ENCODE measurements at regions of chr6 and their contacts with region 1.

Region 1: DNA sequence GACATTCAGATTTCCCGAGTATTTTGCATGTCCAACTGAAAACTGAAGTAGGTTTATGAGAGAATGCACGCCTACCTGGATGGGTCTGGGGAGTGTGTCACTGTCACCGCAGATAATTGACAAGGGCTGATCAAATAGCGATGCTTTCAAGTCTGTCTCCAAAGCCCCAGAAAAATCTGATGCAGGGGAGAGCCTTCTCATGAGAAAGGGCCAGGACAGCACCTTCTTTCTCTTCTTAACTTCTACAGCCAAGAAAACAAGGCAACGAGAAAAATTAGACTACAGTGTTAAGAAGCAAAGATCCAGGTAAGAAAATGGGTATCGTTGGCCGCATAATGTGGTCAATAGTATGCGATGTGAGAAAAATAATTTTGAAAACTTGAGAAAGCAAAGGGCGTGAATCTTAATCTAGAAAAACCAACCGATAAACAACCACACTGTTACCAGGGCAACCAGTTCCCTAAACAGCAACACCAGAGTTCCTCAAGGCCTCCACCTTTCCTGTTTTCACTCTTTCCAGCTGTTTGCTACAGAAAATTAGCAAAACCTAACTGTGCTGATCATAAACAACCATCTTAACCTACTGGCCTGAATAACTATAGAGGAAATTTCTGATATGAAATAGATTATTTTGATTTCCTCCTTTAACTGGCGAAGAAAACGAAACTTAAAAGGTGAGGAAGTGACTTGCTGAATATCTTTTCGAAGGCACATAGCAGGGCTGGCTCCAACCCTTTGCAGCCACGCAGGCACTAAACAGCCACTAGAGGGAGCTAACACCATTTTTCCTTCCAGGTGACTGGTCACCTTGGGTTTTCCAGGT is 2.6 kb downstream of the TAGAP start:
- DNase-seq: peak; percentile 93
- H3K4me3 Mint-ChIP-seq: peak overlapping the region; percentile 94
- H3K27ac Mint-ChIP-seq: peak overlapping the region; percentile 99
- H3K4me1 Mint-ChIP-seq: peaks cover 58% of the 10 kb centered on the region
- H3K27me3 Mint-ChIP-seq: no peaks in the 10 kb centered on the region

Region 2: DNA sequence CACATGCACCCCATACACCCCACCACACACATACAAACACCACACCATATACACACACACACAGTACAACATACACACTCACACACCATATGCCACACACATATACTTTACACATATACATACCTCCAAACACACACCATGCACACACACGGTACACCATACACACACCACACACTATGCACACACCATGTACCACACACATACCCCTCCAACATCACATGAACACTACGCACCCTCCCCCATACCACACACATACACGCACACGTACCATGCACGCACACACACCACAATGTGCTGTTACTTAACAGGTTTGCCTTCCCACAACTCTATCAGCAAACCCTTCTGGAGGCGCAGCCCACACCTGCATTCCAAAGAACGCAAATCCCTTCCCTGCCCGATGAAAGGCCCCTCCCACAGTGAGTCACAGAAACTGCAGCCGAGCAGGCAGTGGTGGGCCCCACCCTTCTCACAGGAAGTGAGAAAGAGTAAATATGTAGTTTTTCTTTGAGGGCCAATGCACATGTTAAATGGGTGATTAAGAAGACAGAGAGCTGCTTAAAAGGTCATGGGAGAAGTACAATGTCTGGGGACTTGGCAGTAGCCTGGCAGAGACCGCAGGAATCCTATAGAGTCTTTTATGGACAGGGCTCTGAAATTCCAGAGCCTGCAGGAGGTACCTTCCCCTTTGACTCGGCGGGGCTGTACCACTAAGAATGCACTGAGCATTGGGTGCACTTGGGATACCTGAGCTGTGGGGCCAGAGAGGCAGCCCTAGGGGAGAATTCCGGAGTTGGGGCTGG is 188.9 kb before region 1 on chr6:
- intact Hi-C with region 1: loop called (anchors 5 kb)
- DNase-seq: peak; percentile 96
- H3K4me3 Mint-ChIP-seq: no peak overlapping the region
- H3K27ac Mint-ChIP-seq: no peak overlapping the region
- H3K4me1 Mint-ChIP-seq: peaks cover 32% of the 10 kb centered on the region
- H3K27me3 Mint-ChIP-seq: no peaks in the 10 kb centered on the region

Region 3: DNA sequence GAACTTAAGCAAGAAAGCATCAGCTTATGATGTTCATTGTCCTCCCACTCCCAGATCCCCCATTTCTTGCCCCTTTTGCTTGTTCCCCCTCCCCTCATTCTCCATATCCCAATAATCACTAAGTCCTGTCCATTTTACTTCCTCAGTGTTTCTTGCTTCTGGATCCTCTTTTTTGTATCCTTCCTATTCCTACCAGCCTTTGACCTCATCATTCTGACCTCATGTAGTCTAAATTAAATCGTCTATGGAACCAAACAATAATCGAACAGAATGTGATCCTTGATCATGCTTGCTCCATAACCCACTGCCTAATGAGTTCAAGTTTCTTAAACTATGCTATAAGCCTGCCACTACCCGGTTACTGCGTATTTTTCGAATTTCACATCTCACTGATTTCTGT is 36.8 kb before region 1 on chr6:
- intact Hi-C with region 1: no loop called
- DNase-seq: no peak
- H3K4me3 Mint-ChIP-seq: no peak overlapping the region
- H3K27ac Mint-ChIP-seq: no peak overlapping the region
- H3K4me1 Mint-ChIP-seq: peaks cover 25% of the 10 kb centered on the region
- H3K27me3 Mint-ChIP-seq: no peaks in the 10 kb centered on the region

Region 4: GRCh38 chr6:159017757-159018559 is 24.3 kb before region 1 on chr6:
- intact Hi-C with region 1: loop called (anchors 1 kb)
- DNase-seq: no peak
- H3K4me3 Mint-ChIP-seq: peak overlapping the region; percentile 45
- H3K27ac Mint-ChIP-seq: peak overlapping the region; percentile 79
- H3K4me1 Mint-ChIP-seq: peaks cover 42% of the 10 kb centered on the region
- H3K27me3 Mint-ChIP-seq: no peaks in the 10 kb centered on the region

Region 5: DNA sequence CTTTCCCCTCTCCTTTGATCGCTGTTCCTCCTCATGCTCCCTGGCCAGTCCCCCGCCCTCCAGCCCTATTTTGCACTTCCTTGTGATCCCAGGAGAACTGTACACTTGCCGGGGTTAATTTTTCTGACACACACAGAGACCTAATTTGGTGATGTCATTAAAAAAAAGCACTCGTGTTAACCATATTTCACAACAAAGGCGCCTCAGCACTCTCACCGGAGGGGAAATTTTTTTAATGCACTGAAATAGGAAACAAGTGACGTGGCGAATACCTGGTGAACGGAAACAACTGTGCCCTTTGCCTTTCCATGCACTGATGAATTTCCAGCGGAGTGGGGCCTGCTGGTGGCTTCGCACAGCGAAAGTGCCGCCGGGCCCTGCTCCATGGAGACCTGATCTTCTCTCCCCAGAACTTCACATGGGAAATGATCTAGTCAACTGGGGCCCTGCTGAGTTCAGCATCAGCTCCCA is 56.5 kb after region 1 on chr6:
- intact Hi-C with region 1: loop called (anchors 1 kb)
- DNase-seq: peak; percentile 90
- H3K4me3 Mint-ChIP-seq: peak overlapping the region; percentile 77
- H3K27ac Mint-ChIP-seq: peak overlapping the region; percentile 99
- H3K4me1 Mint-ChIP-seq: peaks cover 76% of the 10 kb centered on the region
- H3K27me3 Mint-ChIP-seq: no peaks in the 10 kb centered on the region

Region 6: GRCh38 chr6:159726918-159727716 is 684.9 kb after region 1 on chr6 and contains the start of gene WTAP:
- intact Hi-C with region 1: loop called (anchors 5 kb)
- DNase-seq: peak; percentile 98
- H3K4me3 Mint-ChIP-seq: peak within 1 kb of the TSS; percentile 96
- H3K27ac Mint-ChIP-seq: peak within 1 kb of the TSS; percentile 98
- H3K4me1 Mint-ChIP-seq: peaks cover 34% of the 10 kb centered on the region
- H3K27me3 Mint-ChIP-seq: no peaks in the 10 kb centered on the region
- total RNA-seq, gene WTAP: 107 and 109 TPM in 2 replicates

Measured in activated CD4-positive, alpha-beta T cell treated with anti-CD3 and anti-CD28 coated beads, Interleukin-2, amount 10 ng/mL, durations not matched to agents 24 days and 14 days (primary cell).